ENCODE measurements at regions of chr1 and their contacts with region 1.

Region 1: DNA sequence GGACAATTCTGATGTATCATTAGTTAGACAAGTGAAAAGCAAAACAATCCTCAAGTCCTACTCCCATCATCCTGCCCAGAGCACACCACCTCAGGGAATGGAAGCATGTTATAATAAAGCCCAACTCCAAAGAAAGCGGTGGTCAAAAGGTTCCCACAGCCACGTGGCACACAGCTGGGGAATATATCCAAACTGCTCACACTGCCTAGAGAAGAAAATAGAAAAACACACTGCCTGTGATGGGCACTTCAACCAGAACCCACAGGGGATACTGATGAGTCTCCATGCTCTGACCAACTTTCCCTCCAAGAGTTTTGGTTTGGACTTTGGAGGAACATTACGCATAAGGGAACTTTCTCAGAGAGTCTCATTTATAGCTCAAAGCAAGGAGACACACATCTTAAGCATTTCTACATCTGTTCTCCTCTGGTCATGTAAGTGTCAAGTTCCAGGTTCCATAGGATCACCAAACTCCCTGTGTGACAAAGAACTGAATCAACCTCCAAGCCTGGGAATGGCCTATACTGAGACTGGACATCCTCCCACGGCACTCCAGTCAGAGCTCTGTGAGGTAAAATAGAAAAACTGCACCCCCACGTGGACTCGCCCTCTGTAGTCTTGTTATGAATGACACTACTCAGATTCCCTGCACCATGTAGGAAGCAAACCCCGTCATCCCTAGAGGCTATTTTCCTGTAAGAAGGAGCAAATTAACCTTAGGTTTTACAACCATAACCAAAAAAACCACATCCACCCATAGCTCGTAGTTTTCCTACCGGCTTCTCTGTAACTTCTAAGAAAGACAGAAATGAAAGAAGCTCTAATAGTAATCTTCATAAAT is 12.2 kb downstream of the DSTYK start:
- DNase-seq: peak; percentile 29
- H3K4me3 Mint-ChIP-seq: peak overlapping the region; percentile 63
- H3K27ac Mint-ChIP-seq: peak overlapping the region; percentile 94
- H3K4me1 Mint-ChIP-seq: peaks cover 82% of the 10 kb centered on the region
- H3K27me3 Mint-ChIP-seq: no peaks in the 10 kb centered on the region

Region 2: DNA sequence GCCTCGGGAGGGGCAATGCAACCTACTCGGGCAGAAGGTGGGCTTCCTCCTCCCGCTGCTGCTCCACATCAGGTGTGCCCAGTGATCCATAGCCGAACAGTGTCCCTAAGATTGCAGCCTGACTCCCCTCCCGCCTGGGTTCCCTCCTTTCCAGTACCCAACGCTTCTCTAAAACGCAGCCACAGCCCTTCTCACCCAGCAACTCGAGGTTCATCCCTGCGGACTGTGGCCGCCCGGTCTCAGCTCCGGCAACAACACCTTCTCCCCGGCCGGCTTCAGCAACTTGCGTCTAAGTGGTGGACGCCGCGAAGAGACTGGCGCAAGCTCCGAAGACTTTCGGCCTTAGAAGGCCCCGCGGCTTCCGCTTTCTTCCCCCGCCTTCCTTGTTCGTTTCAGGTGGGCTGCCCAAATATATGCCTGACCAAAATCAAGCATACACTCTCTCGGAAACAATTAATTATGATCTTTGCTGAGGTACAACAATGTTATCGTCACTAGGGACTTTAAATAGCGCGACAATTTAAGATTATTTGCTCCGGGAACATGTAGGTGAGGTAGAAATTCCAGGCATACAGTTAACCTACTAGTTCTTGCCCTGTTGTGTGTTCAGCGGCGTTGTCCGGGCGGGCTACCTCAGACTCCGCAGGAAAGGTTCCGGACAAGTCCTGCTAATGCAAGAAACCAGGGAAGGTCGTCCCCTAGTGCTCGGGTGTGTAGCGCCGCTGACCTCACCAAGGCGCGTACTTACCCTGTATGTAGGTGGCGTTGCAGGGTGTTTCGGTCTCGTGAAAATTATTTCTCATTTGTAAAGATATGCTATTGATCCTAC is 77.4 kb before region 1 on chr1 and contains the start of gene RBBP5:
- intact Hi-C with region 1: loop called (anchors 1 kb)
- DNase-seq: peak; percentile 92
- H3K4me3 Mint-ChIP-seq: peak within 1 kb of the TSS; percentile 98
- H3K27ac Mint-ChIP-seq: peak within 1 kb of the TSS; percentile 98
- H3K4me1 Mint-ChIP-seq: peaks cover 39% of the 10 kb centered on the region
- H3K27me3 Mint-ChIP-seq: no peaks in the 10 kb centered on the region
- total RNA-seq, gene RBBP5: 21.5 and 24.7 TPM in 2 replicates

Region 3: DNA sequence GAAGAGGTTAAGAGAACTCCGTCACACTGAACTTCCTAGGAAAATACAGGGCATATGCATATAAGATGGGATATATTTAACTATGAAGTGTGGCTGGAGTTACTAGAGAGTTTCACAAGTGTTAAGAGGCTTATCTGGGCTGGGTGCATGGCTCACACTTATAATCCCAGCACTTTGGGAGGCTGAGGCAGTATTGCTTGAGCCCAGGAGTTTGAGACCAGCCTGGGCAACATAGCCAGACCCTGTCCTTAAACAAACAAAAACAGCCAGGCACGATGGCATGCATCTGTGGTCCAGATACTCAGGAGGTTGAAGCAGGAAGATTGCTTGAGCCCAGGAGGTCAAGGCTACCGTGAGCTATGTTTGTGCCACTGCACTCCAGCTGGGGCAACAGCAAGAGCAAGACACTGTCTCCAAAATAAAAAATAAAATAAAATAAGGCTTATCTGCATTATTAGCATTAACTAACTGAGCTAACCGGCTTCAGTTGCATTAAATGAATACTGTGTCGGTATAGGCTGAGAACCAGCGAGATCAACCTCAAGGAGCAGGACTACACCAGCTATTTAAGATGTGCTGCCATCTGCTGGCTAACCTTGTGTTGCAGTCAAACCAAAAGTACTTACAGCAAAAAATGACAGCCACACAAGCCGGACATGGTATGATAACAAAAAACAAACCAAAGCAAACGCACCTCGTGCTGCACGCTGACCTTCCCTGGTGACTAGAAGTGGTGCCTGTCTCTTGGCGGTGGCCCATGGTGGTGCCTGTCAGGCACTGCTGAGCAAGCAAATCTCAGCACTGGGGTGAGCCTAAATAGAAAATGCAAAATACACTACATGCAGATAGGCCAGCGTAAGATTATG is 57.8 kb before region 1 on chr1:
- intact Hi-C with region 1: loop called (anchors 2 kb)
- DNase-seq: peak; percentile 59
- H3K4me3 Mint-ChIP-seq: no peak overlapping the region
- H3K27ac Mint-ChIP-seq: no peak overlapping the region
- H3K4me1 Mint-ChIP-seq: peaks cover 9% of the 10 kb centered on the region
- H3K27me3 Mint-ChIP-seq: no peaks in the 10 kb centered on the region

Region 4: GRCh38 chr1:205172729-205173366 is 26.5 kb before region 1 on chr1:
- intact Hi-C with region 1: loop called (anchors 1 kb)
- DNase-seq: no peak
- H3K4me3 Mint-ChIP-seq: peak overlapping the region; percentile 45
- H3K27ac Mint-ChIP-seq: peak overlapping the region; percentile 81
- H3K4me1 Mint-ChIP-seq: peaks cover 37% of the 10 kb centered on the region
- H3K27me3 Mint-ChIP-seq: no peaks in the 10 kb centered on the region

Region 5: DNA sequence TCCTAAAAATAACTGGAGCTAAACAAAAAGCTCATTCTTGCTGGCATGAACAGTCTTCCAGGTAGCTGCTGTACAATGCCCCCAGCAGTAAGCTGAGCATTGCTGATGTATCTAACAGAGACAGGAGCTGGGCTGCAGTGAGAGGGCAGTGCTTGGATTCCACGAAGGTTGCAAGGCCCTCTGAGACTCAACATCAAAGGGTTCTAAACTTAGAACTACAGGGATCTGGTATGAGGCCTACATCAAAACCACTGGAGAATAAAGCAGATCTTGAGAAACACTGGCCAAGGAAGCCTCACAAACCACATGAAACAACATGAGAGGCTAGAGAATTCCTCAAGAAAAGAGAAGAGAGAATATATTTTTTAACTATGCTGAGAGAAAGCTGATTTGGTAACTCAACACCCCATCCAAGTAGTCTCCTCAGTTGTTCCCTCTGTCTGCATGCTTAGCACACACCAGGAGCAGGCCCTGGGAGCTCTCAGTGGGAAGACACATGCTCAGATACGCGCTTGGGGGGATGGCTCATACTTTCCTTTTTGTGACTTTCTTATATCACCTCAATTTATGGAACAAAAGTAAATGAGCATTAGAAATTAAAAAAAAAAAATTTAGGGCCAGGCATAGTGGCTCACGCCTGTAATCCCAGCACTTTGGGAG is 15.5 kb before region 1 on chr1:
- intact Hi-C with region 1: loop called (anchors 1 kb)
- DNase-seq: no peak
- H3K4me3 Mint-ChIP-seq: no peak overlapping the region
- H3K27ac Mint-ChIP-seq: peak overlapping the region; percentile 51
- H3K4me1 Mint-ChIP-seq: peaks cover 71% of the 10 kb centered on the region
- H3K27me3 Mint-ChIP-seq: no peaks in the 10 kb centered on the region

Region 6: GRCh38 chr1:205211169-205211838 is 12.0 kb after region 1 on chr1 and contains the start of gene DSTYK:
- intact Hi-C with region 1: loop called (anchors 1 kb)
- DNase-seq: peak; percentile 89
- H3K4me3 Mint-ChIP-seq: peak within 1 kb of the TSS; percentile 99
- H3K27ac Mint-ChIP-seq: peak within 1 kb of the TSS; percentile 94
- H3K4me1 Mint-ChIP-seq: peaks cover 49% of the 10 kb centered on the region
- H3K27me3 Mint-ChIP-seq: no peaks in the 10 kb centered on the region
- total RNA-seq, gene DSTYK: 34.2 and 35.9 TPM in 2 replicates

Region 7: GRCh38 chr1:205284343-205285144 is 85.2 kb after region 1 on chr1:
- intact Hi-C with region 1: loop called (anchors 1 kb)
- DNase-seq: peak; percentile 84
- H3K4me3 Mint-ChIP-seq: peak overlapping the region; percentile 64
- H3K27ac Mint-ChIP-seq: peak overlapping the region; percentile 90
- H3K4me1 Mint-ChIP-seq: peaks cover 75% of the 10 kb centered on the region
- H3K27me3 Mint-ChIP-seq: peaks cover 9% of the 10 kb centered on the region